Activated naive CD4-positive, alpha-beta T cell treated with anti-CD3 and anti-CD28 coated beads, Interleukin-2, amount 10 ng/mL, durations not matched to agents 7 days and 5 days (primary cell): ENCODE measurements at regions of chr7 and their contacts with region 1.

Region 1: DNA sequence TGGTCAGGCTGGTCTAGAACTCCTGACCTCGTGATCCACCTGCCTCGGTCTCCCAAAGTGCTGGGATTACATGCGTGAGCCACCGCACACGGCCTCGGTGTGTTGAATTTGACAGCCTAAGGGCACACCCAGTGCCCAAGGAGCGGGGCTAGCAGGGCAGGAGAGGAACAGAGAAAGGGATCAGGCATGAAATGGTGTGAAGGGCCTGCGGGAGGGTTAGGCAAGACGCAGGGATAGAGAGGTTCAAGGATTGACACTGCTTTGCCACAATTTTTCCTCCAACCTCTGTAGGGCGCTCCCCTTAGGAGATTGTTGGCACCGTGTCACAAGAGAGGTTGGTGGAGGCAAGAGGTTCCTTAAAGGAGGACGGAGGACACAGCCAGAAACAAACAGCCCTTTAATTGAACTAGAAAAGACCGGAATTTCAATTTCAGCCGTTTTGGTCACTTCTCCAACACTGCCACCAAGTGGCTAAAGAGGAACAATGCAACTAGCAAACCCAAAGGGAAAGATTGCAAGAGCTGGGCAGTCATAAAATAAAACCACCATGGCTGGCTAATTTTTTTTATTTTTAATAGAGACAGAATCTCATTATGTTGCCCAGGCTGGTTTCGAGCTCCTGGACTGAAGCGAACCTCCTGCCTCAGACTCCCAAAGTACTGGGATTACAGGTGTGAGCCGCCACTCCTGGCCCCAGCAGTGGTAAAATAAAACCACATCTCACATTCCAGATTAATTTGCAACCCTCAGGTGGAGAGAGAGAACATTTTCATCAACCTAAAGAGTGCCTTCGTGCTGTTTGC is 6.9 kb upstream of the CREB3L2 start:
- DNase-seq: peak; percentile 41
- H3K4me3 Mint-ChIP-seq: no peak overlapping the region
- H3K27ac Mint-ChIP-seq: no peak overlapping the region
- H3K4me1 Mint-ChIP-seq: peaks cover 9% of the 10 kb centered on the region
- H3K27me3 Mint-ChIP-seq: peaks cover 10% of the 10 kb centered on the region

Region 2: DNA sequence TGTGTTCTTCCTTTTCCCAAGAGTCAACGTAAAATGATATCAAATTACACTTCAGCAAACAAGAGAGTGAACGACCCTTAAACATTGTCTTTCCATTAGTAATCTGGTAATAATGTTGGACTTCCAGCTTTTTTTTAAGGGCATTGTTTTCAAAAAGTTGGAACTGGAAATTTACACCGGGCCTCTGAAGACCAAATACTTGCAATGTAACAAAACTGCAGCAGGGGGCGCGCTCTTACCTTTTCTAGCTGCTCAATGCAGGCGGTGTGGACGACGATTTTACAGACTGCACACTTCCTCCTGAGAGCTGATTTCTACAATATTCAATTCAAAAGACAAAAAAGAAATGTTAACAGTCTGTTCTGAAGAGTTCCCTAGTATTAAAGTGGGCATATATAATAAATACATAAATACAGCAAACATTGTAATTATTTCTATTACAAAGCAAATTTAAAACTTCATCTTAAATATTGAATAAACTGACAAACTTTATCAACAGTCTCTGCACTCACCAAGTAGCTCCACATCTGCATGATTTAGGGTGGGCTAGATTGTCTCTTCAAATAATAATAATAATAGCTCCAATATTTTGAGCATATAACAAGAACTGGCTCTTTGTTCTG is 352.4 kb before region 1 on chr7:
- CTCF ChIA-PET with region 1: interaction called, 27 read pairs
- DNase-seq: peak; percentile 78
- H3K4me3 Mint-ChIP-seq: no peak overlapping the region
- H3K27ac Mint-ChIP-seq: no peak overlapping the region
- H3K4me1 Mint-ChIP-seq: no peaks in the 10 kb centered on the region
- H3K27me3 Mint-ChIP-seq: no peaks in the 10 kb centered on the region

Region 3: GRCh38 chr7:138282997-138283396 is 274.2 kb after region 1 on chr7:
- CTCF ChIA-PET with region 1: no interaction called
- DNase-seq: no peak
- H3K4me3 Mint-ChIP-seq: no peak overlapping the region
- H3K27ac Mint-ChIP-seq: no peak overlapping the region
- H3K4me1 Mint-ChIP-seq: no peaks in the 10 kb centered on the region
- H3K27me3 Mint-ChIP-seq: peaks cover 3% of the 10 kb centered on the region

Region 4: GRCh38 chr7:138519061-138519798 is 510.5 kb after region 1 on chr7:
- CTCF ChIA-PET with region 1: no interaction called
- DNase-seq: no peak
- H3K4me3 Mint-ChIP-seq: no peak overlapping the region
- H3K27ac Mint-ChIP-seq: no peak overlapping the region
- H3K4me1 Mint-ChIP-seq: no peaks in the 10 kb centered on the region
- H3K27me3 Mint-ChIP-seq: no peaks in the 10 kb centered on the region